ENCODE measurements at regions of chr12 and their contacts with region 1.

Region 1: GRCh38 chr12:53321074-53321814 is at the start of gene AAAS:
- DNase-seq: peak; percentile 85 to 97 (median 95)
- ATAC-seq: peak; percentile 82
- H3K4me3 ChIP-seq: peak within 1 kb of the TSS; percentile 67 to 99
- H3K4me3 Mint-ChIP-seq: peak within 1 kb of the TSS; percentile 97
- H3K27ac ChIP-seq: peak within 1 kb of the TSS; percentile 67 to 80
- H3K27ac Mint-ChIP-seq: peak within 1 kb of the TSS; percentile 92
- H3K4me1 ChIP-seq: peaks cover 31% of the 10 kb centered on the region
- H3K4me1 Mint-ChIP-seq: peaks cover 42% of the 10 kb centered on the region
- H3K27me3 ChIP-seq: no peaks in the 10 kb centered on the region
- H3K27me3 Mint-ChIP-seq: no peaks in the 10 kb centered on the region
- CTCF ChIP-seq: peak; percentile 99
- total RNA-seq, gene AAAS: 17.0 to 21.5 TPM

Region 2: DNA sequence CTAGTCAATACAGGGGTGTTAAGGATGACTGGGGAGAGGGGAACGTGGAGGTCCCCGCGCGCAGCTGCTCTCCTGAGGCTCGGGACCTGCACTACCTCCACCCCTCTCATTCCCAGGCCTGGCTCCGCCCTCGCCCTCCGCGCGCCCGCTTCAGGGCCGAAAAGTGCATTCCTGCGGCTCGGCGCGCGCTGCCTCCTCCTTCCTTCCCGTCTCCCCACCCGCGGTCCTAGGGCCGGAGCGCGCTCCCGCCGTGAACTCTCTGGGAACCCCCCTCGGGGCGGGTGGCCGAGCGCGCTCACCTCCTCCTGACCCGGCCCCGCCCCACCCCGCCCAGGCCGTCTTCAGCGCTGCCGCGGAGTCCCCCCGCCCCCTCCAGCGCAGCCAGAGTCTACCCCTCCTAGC is 100.4 kb before region 1 on chr12:
- CTCF ChIA-PET with region 1: interaction called, 33 read pairs
- POLR2A ChIA-PET with region 1: interaction called, 6 read pairs
- intact Hi-C with region 1: loop called in 1 of 2 experiments (anchors 1 kb)
- DNase-seq: peak; percentile 46 to 93 (median 75)
- ATAC-seq: peak; percentile 60
- H3K4me3 ChIP-seq: peak overlapping the region; percentile 69 to 88
- H3K4me3 Mint-ChIP-seq: peak overlapping the region; percentile 99
- H3K27ac ChIP-seq: peak overlapping the region; percentile 66 to 91
- H3K27ac Mint-ChIP-seq: peak overlapping the region; percentile 93
- H3K4me1 ChIP-seq: peaks cover 67% of the 10 kb centered on the region
- H3K4me1 Mint-ChIP-seq: peaks cover 82% of the 10 kb centered on the region
- H3K27me3 ChIP-seq: no peaks in the 10 kb centered on the region
- H3K27me3 Mint-ChIP-seq: no peaks in the 10 kb centered on the region
- CTCF ChIP-seq: no peak

Region 3: DNA sequence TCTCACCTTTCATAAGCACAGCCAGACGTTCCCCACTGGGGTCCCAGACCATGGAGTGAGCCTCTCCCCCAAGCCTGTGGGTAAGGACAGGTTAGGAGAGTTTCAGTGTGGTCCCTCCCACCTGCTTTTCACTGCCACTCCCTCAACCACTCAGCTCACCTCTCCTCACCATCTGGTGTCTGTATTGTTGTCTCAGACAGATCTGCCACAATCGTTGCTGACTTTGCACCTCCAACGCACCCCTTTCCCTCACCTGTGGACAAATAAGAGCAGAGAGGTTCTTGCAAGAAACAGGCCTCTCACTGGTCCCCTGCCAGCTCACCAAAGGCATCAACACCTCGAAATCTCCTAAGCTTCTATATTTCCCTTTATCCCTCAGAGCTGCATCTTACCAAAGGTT is 13.0 kb before region 1 on chr12:
- CTCF ChIA-PET with region 1: interaction called, 30 read pairs
- POLR2A ChIA-PET with region 1: interaction called, 4 read pairs
- intact Hi-C with region 1: no loop called
- DNase-seq: no peak
- ATAC-seq: no peak
- H3K4me3 ChIP-seq: no peak overlapping the region
- H3K4me3 Mint-ChIP-seq: no peak overlapping the region
- H3K27ac ChIP-seq: no peak overlapping the region
- H3K27ac Mint-ChIP-seq: no peak overlapping the region
- H3K4me1 ChIP-seq: no peaks in the 10 kb centered on the region
- H3K4me1 Mint-ChIP-seq: peaks cover 6% of the 10 kb centered on the region
- H3K27me3 ChIP-seq: no peaks in the 10 kb centered on the region
- H3K27me3 Mint-ChIP-seq: no peaks in the 10 kb centered on the region
- CTCF ChIP-seq: no peak

Region 4: GRCh38 chr12:53379389-53380103 is 58.3 kb after region 1 on chr12:
- CTCF ChIA-PET with region 1: interaction called, 13 read pairs
- POLR2A ChIA-PET with region 1: interaction called, 11 read pairs
- intact Hi-C with region 1: loop called (anchors 1 to 2 kb)
- DNase-seq: peak in 8 of 9 experiments; percentile 79 to 100 (median 92)
- ATAC-seq: peak; percentile 73
- H3K4me3 ChIP-seq: peak overlapping the region; percentile 64 to 65
- H3K4me3 Mint-ChIP-seq: no peak overlapping the region
- H3K27ac ChIP-seq: peak overlapping the region; percentile 61 to 83
- H3K27ac Mint-ChIP-seq: no peak overlapping the region
- H3K4me1 ChIP-seq: peaks cover 44% of the 10 kb centered on the region
- H3K4me1 Mint-ChIP-seq: peaks cover 35% of the 10 kb centered on the region
- H3K27me3 ChIP-seq: no peaks in the 10 kb centered on the region
- H3K27me3 Mint-ChIP-seq: no peaks in the 10 kb centered on the region
- CTCF ChIP-seq: no peak

Region 5: DNA sequence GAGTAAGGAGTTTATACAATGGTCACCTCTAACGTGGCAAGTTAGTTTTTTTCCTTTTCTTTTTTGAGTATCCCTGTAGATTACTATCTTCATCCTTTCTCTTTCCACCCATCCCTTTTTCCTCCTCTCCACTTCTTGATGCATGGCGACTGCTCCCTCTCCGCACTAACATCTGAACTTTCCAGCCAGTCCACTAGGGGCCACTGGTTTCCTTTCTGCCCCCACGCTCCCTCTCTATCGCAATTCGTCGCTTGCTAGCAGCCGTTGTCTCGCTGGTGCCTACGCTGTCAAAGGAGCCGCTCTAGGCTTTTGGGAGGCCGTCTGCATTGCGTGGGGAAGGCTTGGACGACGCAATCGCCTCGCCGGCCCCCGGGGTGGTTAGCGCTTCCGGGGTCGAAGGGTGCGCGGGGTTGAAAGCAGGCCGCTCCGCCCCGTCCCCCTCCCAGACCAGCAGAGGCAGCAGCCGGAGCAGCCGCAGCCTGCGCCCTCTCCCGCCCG is 130.5 kb after region 1 on chr12 and contains the start of gene PCBP2:
- CTCF ChIA-PET with region 1: no interaction called
- POLR2A ChIA-PET with region 1: interaction called, 4 read pairs
- intact Hi-C with region 1: loop called (anchors 1 kb)
- DNase-seq: peak; percentile 94 to 99 (median 98)
- ATAC-seq: peak; percentile 93
- H3K4me3 ChIP-seq: peak within 1 kb of the TSS; percentile 81 to 88
- H3K4me3 Mint-ChIP-seq: peak within 1 kb of the TSS; percentile 99
- H3K27ac ChIP-seq: peak within 1 kb of the TSS; percentile 80 to 95
- H3K27ac Mint-ChIP-seq: peak within 1 kb of the TSS; percentile 99
- H3K4me1 ChIP-seq: peaks cover 27% of the 10 kb centered on the region
- H3K4me1 Mint-ChIP-seq: peaks cover 43% of the 10 kb centered on the region
- H3K27me3 ChIP-seq: no peaks in the 10 kb centered on the region
- H3K27me3 Mint-ChIP-seq: no peaks in the 10 kb centered on the region
- CTCF ChIP-seq: peak; percentile 94
- total RNA-seq, gene PCBP2: 1,250 to 1,255 TPM